ENCODE measurements at regions of chr19 and their contacts with region 1.

Region 1: DNA sequence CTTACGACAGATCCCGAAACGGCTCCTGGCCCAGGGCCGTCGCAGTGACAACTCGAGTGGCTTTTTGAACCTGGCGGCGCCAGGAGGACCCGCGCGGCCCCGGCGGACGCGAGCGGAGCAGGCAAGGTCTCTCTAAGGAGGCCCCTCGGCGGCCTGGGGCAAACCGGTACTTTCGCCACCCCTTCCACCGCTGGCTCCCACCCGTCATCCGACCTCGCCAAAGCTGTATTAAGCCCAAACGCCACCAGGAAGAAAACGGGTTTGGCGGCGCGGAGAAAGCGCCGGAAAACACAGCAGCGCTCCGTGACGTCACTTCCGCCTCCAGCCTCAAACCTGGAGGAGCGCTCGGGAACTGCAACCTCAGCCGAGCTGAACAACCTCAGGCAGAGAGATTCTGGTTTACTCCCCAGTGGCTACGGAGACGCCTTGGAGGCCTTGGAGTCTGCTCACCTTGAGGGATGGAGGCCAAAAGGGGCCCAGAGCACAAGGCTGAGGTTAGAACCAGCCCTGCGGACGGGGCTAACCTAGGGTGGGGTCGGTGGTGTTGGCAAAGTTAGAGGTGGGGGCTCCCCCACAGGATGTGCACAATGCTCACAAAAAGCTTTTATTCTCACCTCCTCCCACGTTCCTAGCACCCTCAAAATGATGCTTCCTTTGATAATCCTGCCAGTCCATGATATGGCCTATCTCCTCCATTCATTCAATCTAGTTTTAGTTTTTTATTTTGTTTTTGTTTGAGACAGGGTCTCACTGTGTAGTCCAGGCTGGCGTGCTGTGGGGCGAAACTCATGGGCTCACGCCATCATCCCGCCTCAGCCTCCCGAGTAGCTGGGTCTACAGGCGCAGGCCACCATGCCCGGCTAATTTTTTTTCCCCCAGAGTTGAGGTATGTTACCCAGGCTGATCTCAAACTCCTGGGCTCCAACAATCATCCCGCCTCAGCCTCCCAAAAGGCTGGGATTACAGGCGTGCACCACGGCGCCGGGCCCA is at the start of gene ZNF266:
- DNase-seq: peak; percentile 90
- H3K4me3 ChIP-seq: peak within 1 kb of the TSS; percentile 43 to 90 (median 82)
- H3K27ac ChIP-seq: peak within 1 kb of the TSS; percentile 57
- H3K4me1 ChIP-seq: peaks cover 13% of the 10 kb centered on the region
- H3K27me3 ChIP-seq: no peaks in the 10 kb centered on the region
- CTCF ChIP-seq: peak; percentile 57 to 81
- POLR2A ChIP-seq: no peak
- total RNA-seq, gene ZNF266: 16.7 and 17.0 TPM in 2 replicates

Region 2: GRCh38 chr19:9205501-9206113 is 230.0 kb before region 1 on chr19:
- CTCF ChIA-PET with region 1: interaction called, 8 read pairs
- POLR2A ChIA-PET with region 1: no interaction called
- dilution Hi-C with region 1: no loop called
- intact Hi-C with region 1: loop called (anchors 1 kb)
- DNase-seq: peak; percentile 58
- H3K4me3 ChIP-seq: no peak overlapping the region
- H3K27ac ChIP-seq: no peak overlapping the region
- H3K4me1 ChIP-seq: no peaks in the 10 kb centered on the region
- H3K27me3 ChIP-seq: no peaks in the 10 kb centered on the region
- CTCF ChIP-seq: peak; percentile 74 to 87
- POLR2A ChIP-seq: no peak

Region 3: DNA sequence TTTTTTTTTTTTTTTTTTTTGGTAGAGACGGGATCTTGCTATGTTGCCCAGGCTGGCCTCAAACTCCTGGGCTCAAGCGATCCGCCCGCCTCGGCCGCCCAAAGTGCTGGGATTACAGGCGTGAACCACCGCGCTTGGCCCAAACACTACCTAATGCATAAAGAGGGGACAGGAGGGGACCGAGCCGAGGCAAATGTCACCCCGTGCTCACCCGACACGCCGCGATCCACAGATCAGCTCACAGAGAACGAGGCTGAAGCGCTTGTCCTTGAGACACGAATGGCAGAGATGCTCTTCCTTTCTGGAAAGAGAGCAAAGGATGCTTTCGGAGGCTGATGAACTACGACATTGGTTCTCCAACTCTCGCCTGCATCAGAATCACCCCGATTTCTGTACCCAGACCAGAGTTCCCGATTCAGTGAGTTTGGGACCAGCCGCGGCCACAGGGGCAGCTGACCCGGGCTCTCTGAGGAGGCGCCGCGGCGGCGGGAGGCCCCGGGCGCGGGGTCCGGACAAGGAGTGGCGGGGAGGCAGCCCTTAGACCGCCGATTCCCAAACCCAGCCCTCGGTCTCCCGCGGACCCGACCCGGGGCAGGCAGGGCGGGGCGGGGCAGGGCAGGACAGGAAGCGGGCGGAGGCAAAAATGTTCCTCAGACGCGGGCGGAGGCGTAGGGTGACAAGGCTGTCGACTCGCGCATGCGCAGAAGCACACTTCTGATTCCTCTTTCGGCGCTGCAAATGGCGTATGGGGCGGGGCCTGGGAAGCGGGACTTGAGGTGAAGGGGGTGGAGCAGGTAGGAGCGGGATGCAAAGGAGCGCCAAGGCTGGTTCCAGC is 126.2 kb before region 1 on chr19 and contains the start of gene ZNF699:
- CTCF ChIA-PET with region 1: interaction called, 4 read pairs
- POLR2A ChIA-PET with region 1: no interaction called
- dilution Hi-C with region 1: no loop called
- intact Hi-C with region 1: loop called (anchors 2 kb)
- DNase-seq: peak; percentile 98
- H3K4me3 ChIP-seq: peak within 1 kb of the TSS; percentile 52 to 88 (median 67)
- H3K27ac ChIP-seq: peak within 1 kb of the TSS; percentile 55
- H3K4me1 ChIP-seq: peaks cover 7% of the 10 kb centered on the region
- H3K27me3 ChIP-seq: no peaks in the 10 kb centered on the region
- CTCF ChIP-seq: no peak
- POLR2A ChIP-seq: no peak
- total RNA-seq, gene ZNF699: 3.9 and 4.7 TPM in 2 replicates

Region 4: GRCh38 chr19:9323919-9324583 is 111.5 kb before region 1 on chr19 and contains the start of gene ZNF559:
- CTCF ChIA-PET with region 1: no interaction called
- POLR2A ChIA-PET with region 1: no interaction called
- dilution Hi-C with region 1: no loop called
- intact Hi-C with region 1: loop called (anchors 1 kb)
- DNase-seq: peak; percentile 98
- H3K4me3 ChIP-seq: peak within 1 kb of the TSS; percentile 74 to 94 (median 90)
- H3K27ac ChIP-seq: peak within 1 kb of the TSS; percentile 59
- H3K4me1 ChIP-seq: peaks cover 10% of the 10 kb centered on the region
- H3K27me3 ChIP-seq: no peaks in the 10 kb centered on the region
- CTCF ChIP-seq: peak; percentile 23 to 33
- POLR2A ChIP-seq: peak; percentile 9
- total RNA-seq, gene ZNF559: 10.1 and 13.5 TPM in 2 replicates

Region 5: DNA sequence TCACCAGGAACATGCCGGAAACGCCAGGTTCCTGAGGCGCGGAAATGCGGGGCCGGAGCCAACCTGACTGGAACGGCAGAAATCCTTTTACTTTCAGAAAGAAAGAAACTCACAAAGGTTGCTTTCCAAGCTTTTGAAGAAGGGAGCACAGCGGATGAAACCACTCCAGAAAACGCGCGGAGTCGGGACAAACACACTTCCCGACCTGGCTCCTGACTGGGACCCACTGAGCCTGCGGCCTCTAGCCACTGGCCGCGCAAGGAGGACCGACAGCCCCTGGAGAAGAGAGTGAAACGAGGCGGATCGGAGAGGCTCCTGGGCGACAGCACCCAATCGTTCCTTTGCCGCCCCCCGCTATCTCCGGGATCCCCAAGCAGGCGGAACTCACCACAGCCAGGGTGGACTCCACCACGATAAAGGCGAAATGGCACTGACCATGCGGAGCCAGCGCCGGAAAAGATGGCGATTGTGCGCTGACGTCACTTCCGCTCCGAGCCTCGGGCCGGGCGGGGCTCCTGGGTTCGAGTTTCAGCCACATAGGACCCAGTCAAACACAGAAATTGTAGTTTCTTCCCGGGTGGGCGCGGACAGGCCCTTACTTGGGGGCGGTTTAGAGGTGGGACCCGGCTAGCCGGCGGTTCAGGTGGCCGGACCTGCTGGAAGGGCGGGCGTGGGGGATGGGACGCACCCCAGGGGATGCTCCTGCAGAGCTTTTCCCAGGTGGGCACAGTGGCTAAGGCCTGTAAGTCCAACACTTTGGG is 148.7 kb after region 1 on chr19 and contains the start of gene ZNF121:
- CTCF ChIA-PET with region 1: interaction called, 4 read pairs
- POLR2A ChIA-PET with region 1: no interaction called
- dilution Hi-C with region 1: no loop called
- intact Hi-C with region 1: loop called (anchors 5 kb)
- DNase-seq: peak; percentile 82
- H3K4me3 ChIP-seq: peak within 1 kb of the TSS; percentile 72 to 97 (median 90)
- H3K27ac ChIP-seq: peak within 1 kb of the TSS; percentile 82
- H3K4me1 ChIP-seq: no peaks in the 10 kb centered on the region
- H3K27me3 ChIP-seq: no peaks in the 10 kb centered on the region
- CTCF ChIP-seq: no peak
- POLR2A ChIP-seq: peak; percentile 94
- total RNA-seq, gene ZNF121: 21.4 and 25.1 TPM in 2 replicates

Region 6: DNA sequence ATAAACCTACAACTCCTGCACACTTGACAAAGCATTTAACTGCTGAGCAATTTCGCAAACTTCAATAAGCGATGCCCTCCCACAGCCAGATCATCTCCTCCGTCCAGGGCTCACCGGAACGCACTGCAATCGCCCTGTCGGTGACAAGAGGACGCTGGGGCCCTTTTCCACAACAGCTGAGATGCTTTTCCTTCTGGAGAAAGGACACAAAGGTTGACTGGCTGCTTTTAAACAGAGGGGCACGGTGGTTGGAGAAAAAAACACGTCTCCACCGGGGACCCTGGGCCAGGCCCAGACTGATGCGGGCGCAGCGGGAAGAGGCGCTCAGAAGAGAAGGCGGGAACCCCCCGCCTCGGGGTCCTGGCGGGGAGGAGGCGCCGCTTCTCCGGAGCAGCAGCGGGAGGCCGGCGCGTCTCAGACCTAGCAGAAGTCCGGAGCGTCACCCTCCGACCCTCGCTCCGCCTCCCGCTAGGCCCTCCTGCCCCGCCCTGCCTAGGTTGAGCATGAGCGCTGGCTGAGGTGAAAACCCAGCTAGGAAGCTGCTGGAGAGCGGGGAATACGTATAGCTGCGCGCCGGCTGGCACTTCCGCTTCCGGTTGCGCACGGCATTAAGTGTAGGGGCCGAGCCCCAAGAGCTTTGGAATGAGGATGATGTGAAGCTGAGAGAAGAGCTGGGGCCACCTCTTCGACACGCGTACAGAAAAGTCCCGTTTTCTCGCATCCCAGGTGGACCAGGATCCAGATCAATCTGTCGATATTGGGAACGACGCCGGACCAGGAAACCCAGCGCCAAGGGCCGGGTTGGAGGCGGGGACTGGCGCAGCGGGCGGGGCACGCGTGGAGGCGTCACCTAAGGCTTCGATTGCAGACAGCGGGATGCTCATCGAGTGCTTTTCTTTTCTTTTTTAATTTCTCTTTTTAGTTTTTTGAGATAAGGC is 332.9 kb after region 1 on chr19 and contains the start of gene ZNF846:
- CTCF ChIA-PET with region 1: no interaction called
- POLR2A ChIA-PET with region 1: no interaction called
- dilution Hi-C with region 1: no loop called
- intact Hi-C with region 1: loop called (anchors 1 kb)
- DNase-seq: peak; percentile 93
- H3K4me3 ChIP-seq: peak within 1 kb of the TSS; percentile 42 to 85 (median 83)
- H3K27ac ChIP-seq: peak within 1 kb of the TSS; percentile 85
- H3K4me1 ChIP-seq: peaks cover 7% of the 10 kb centered on the region
- H3K27me3 ChIP-seq: no peaks in the 10 kb centered on the region
- CTCF ChIP-seq: no peak
- POLR2A ChIP-seq: peak; percentile 72
- total RNA-seq, gene ZNF846: 6.9 and 8.3 TPM in 2 replicates